Posterior vena cava (tissue), 2 donors: ENCODE measurements at regions of chr1 and their contacts with region 1.

Region 1: DNA sequence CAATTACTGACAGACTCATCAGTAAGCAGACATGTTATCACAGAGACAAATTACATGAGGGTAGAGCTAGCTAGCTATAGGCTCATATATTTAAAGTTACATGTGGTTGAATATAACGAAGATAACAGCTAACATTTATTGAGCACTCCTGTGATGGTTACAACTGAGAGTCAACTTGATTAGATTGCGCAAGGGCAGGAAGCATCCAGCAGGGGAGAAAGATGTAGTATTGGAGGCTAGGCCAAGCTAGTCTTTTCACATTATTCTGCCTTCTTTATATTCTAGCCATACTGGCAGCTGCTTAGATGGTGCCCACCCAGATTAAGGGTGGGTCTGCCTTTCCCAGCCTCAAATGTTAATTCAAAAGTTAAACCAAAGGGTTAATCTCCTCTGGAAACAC is 37.1 kb downstream of the PIGK start:
- DNase-seq: no peak

Region 2: GRCh38 chr1:77156214-77156613 is 25.9 kb before region 1 on chr1:
- intact Hi-C with region 1: loop called in 1 of 2 experiments (anchors 2 kb)
- DNase-seq: no peak